ENCODE measurements at regions of chr9 and their contacts with region 1.

Region 1: DNA sequence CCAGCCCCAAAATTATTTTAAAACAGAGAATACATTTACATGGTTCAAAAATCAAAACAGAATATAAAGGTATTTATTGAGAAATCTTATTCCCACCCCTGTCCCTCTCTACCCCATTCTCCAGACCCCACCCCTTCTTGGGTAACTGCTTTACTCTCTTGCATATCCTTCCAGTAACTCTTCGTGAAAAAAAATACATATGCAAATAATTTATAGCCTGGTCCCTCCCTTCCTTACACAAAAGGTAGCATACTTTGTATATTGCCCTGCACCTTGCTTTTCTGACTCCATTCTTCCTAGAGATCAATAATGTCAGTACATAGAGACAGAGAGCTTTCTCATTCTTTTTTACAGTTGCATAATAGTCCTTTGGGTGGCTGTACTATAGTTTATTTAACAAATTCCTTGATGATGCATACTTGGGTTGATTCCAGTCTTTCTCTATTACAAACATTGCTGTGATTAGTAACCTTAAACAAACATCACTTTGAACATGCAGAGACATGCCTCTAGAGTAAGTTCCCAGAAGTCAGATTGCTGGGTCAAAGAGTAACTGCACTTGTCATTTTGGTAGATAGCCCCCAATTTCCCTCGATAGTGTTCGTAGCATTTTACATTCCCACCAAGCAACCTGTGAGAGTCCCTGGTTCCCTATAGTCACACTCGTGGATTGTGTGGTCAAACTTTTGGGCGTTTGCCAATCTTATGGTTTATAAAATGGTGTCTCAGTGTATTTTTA is 47.8 kb downstream of the STOM start:
- DNase-seq: no peak
- ATAC-seq: peak; percentile 36
- H3K4me3 ChIP-seq: no peak overlapping the region
- H3K27ac ChIP-seq: peak overlapping the region; percentile 74 to 85
- H3K4me1 ChIP-seq: peaks cover 6 to 72% of the 10 kb centered on the region in 2 donors
- H3K27me3 ChIP-seq: no peaks in the 10 kb centered on the region
- CTCF ChIP-seq: no peak

Region 2: DNA sequence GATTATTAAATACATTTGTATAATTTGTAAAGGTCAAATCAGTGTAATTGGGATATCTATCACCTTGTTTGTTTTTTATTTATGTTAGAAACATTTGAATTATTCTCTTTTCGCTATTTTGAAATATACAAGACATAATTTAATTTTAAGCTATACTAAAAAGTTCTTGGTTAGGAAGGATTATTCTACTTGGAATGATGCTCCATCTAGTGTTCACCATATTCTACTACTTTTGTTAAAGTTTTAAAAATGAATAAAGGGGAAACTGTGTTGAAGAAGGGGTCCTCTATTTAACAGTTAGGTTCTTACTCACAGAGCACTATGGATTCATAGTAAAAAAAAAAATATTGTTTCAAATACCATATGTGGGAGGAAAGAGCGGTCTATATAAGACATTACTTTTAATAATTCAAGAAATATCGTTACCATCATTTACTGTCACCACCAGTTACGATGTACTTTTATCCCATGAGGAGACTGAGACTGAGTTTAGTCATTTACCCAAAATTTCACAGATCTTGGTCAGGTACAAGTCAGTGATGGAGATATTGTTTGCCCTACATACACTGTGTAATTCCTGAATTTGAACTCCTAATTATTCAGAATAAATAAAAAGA is 54.1 kb after region 1 on chr9:
- intact Hi-C with region 1: loop called in 1 of 2 experiments (anchors 5 kb)
- DNase-seq: peak in 1 of 4 donors; percentile 32
- ATAC-seq: no peak
- H3K4me3 ChIP-seq: no peak overlapping the region
- H3K27ac ChIP-seq: no peak overlapping the region
- H3K4me1 ChIP-seq: peaks cover 21 to 28% of the 10 kb centered on the region in 2 donors
- H3K27me3 ChIP-seq: no peaks in the 10 kb centered on the region
- CTCF ChIP-seq: peak in 1 of 2 donors; percentile 34

Region 3: GRCh38 chr9:121399883-121400607 is 77.8 kb after region 1 on chr9:
- intact Hi-C with region 1: loop called in 1 of 2 experiments (anchors 5 kb)
- DNase-seq: peak in 2 of 4 donors; percentile 63 to 76
- ATAC-seq: peak; percentile 88
- H3K4me3 ChIP-seq: no peak overlapping the region
- H3K27ac ChIP-seq: no peak overlapping the region
- H3K4me1 ChIP-seq: peaks cover 0 to 13% of the 10 kb centered on the region in 2 donors
- H3K27me3 ChIP-seq: no peaks in the 10 kb centered on the region
- CTCF ChIP-seq: peak; percentile 62 to 63

Region 4: DNA sequence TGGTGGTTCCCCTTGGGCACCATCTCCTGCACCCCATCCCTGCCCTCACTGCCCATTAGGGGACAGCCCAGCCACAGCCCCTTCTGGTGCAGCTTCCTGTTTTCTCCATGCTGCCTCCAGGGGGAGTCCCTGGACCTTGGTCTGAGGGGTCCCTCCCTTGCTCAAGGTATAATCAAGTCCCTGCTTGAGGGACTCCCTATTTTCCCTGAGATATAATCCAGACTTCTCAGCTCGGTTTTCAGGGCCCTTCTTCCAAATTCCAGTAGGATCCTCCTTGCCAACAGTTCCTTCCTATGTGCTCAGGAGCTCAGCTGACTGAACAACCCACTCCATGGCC is 298.9 kb after region 1 on chr9:
- intact Hi-C with region 1: no loop called
- DNase-seq: no peak
- ATAC-seq: peak; percentile 51
- H3K4me3 ChIP-seq: no peak overlapping the region
- H3K27ac ChIP-seq: no peak overlapping the region
- H3K4me1 ChIP-seq: peaks cover 5 to 23% of the 10 kb centered on the region in 2 donors
- H3K27me3 ChIP-seq: no peaks in the 10 kb centered on the region
- CTCF ChIP-seq: peak; percentile 25 to 27

Region 5: DNA sequence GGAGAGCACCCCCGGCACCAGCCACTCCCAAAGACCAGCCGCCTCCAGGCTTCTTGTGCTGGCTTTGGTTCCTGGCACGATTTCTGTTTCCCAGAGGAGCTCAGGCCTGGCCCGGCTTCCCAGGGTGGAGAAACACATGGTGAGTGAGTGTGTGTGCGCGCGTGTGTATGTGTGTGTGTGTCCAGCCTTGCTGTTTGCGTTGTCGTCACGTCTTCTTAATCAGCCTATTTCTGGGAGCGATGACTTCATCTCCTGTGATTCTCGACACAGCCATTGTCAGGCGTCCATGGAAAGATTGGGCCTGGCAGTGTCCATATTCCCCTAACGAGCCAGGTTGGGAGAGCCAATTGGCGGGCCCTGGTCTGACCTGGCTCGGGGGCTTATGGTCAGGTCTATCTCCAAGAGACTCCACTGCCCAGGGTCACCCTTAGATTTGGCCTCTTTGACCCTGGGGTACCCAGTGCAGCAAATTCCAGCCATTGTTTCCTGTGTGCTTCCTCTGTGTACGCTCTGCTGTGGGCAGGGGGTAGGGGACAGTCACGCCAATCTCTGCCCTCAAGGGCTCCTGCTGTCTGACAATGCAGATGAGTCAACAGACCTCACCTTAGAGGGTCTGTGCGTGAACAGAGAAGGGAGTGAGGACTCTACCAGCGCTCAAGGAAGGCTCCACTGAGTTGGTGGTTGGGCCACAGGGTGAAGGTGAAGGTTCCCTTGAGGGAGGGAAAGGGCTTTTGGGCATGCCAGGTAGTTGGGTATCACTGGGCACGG is 403.0 kb after region 1 on chr9:
- intact Hi-C with region 1: no loop called
- DNase-seq: peak in 3 of 4 donors; percentile 86 to 97 (median 93)
- ATAC-seq: peak; percentile 88
- H3K4me3 ChIP-seq: no peak overlapping the region
- H3K27ac ChIP-seq: peak overlapping the region; percentile 75
- H3K4me1 ChIP-seq: peaks cover 19 to 49% of the 10 kb centered on the region in 2 donors
- H3K27me3 ChIP-seq: no peaks in the 10 kb centered on the region
- CTCF ChIP-seq: no peak